Activated naive CD4-positive, alpha-beta T cell treated with anti-CD3 and anti-CD28 coated beads for 36 hours (primary cell): ENCODE measurements at regions of chr7 and their contacts with region 1.

Region 1: DNA sequence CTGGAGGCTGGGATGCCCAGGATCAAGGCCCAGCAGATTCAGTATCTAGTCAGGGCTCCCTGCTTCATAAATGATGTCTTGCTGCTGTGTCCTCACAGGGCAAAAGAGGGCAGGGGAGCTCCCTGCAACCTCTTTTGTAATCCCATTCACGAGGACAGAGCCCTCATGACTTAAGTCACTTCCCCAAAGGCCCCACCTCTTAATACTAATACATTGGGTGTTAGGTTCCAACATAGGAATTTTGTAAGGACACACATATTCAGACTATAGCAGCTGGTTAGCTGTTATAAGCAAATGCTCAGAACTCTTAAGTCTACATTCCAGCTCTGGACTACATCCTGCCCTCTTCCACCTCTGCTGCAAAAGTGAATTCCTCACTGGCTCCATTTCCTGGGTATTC is 63.0 kb downstream of the VOPP1 start:
- DNase-seq: peak; percentile 36
- H3K4me3 Mint-ChIP-seq: no peak overlapping the region
- H3K27ac Mint-ChIP-seq: peak overlapping the region; percentile 85
- H3K4me1 Mint-ChIP-seq: peaks cover 89% of the 10 kb centered on the region
- H3K27me3 Mint-ChIP-seq: no peaks in the 10 kb centered on the region

Region 2: GRCh38 chr7:55469271-55469681 is 40.0 kb before region 1 on chr7:
- CTCF ChIA-PET with region 1: no interaction called
- intact Hi-C with region 1: loop called (anchors 1 kb)
- DNase-seq: peak; percentile 53
- H3K4me3 Mint-ChIP-seq: no peak overlapping the region
- H3K27ac Mint-ChIP-seq: peak overlapping the region; percentile 83
- H3K4me1 Mint-ChIP-seq: peaks cover 72% of the 10 kb centered on the region
- H3K27me3 Mint-ChIP-seq: no peaks in the 10 kb centered on the region

Region 3: DNA sequence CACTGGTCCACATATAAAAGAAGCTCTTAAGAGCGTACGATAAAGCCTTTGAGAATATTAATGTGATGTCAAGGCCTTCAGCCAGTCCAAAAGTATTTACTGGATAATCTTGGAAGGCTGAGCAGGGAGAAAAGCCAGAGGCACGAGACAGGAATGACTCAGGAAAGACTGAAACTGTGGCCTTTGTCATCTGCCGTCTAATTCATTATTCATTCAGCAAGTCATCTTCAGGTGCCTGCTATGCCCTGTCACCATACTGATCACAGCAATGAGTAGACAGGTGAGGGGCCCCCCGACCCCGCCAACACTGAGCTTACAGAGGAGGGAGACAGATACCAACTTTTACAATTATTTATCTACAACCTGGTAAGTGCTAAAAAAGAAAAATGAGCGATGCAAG is 15.9 kb before region 1 on chr7:
- CTCF ChIA-PET with region 1: no interaction called
- intact Hi-C with region 1: no loop called
- DNase-seq: peak; percentile 31
- H3K4me3 Mint-ChIP-seq: no peak overlapping the region
- H3K27ac Mint-ChIP-seq: no peak overlapping the region
- H3K4me1 Mint-ChIP-seq: peaks cover 39% of the 10 kb centered on the region
- H3K27me3 Mint-ChIP-seq: no peaks in the 10 kb centered on the region

Region 4: GRCh38 chr7:55524558-55525310 is 15.4 kb after region 1 on chr7:
- CTCF ChIA-PET with region 1: interaction called, 11 read pairs
- intact Hi-C with region 1: no loop called
- DNase-seq: no peak
- H3K4me3 Mint-ChIP-seq: no peak overlapping the region
- H3K27ac Mint-ChIP-seq: peak overlapping the region; percentile 40
- H3K4me1 Mint-ChIP-seq: peaks cover 55% of the 10 kb centered on the region
- H3K27me3 Mint-ChIP-seq: no peaks in the 10 kb centered on the region